Activated CD4-positive, alpha-beta T cell treated with anti-CD3 and anti-CD28 coated beads, Interleukin-2, amount 10 ng/mL, durations not matched to agents 24 days and 14 days (primary cell): ENCODE measurements at regions of chr20 and their contacts with region 1.

Region 1: GRCh38 chr20:62302341-62303058 is at the start of gene ADRM1:
- DNase-seq: peak; percentile 99
- H3K4me3 Mint-ChIP-seq: peak within 1 kb of the TSS; percentile 98
- H3K27ac Mint-ChIP-seq: peak within 1 kb of the TSS; percentile 100
- H3K4me1 Mint-ChIP-seq: peaks cover 20% of the 10 kb centered on the region
- H3K27me3 Mint-ChIP-seq: no peaks in the 10 kb centered on the region
- total RNA-seq, gene ADRM1: 179 and 183 TPM in 2 replicates

Region 2: DNA sequence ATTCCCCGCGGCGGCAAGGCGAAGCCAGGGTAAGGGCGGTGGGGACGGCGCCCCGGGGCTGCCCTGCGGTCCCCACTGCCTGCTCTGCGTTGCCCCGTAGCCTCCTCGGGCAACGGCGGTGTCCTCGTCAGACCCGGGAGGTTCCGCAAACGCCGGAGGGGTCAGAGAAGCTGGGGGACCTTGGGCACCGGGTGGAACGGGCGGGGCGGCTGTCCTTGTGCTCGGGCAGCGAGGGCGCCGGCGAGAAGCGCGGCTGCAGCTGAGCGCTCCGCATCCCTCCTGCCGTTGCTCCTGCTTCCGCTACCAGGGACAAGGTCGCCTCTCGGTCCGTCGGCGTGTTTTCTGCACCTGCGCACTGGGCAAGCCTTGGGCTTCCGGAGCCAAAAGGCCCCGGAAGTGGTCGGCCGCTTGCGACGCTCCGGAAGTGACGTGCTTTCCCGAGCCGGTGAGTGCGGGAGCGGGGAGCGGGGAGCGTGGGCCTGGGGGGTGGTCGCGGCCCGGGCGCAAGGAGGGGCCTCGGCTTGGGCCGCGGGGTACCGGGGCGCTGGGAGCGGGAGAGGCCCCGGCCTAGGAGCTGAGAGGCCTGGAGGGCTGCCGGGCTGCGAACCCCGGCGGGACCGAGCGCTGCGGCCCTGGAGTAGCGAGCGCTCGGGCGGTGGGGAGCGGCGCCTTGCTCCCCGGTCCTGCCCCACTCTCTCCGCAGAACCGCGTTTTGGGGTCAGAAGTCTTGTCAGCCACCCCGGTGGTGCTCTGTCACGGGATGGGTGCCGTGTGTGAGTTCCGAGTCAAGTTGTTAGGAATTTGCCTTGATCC is 119.7 kb before region 1 on chr20 and contains the start of gene MTG2:
- intact Hi-C with region 1: loop called (anchors 2 kb)
- DNase-seq: peak; percentile 99
- H3K4me3 Mint-ChIP-seq: peak within 1 kb of the TSS; percentile 92
- H3K27ac Mint-ChIP-seq: peak within 1 kb of the TSS; percentile 95
- H3K4me1 Mint-ChIP-seq: peaks cover 25% of the 10 kb centered on the region
- H3K27me3 Mint-ChIP-seq: no peaks in the 10 kb centered on the region
- total RNA-seq, gene MTG2: 43.0 and 44.4 TPM in 2 replicates

Region 3: GRCh38 chr20:62368976-62369814 is 66.7 kb after region 1 on chr20:
- intact Hi-C with region 1: loop called (anchors 5 kb)
- DNase-seq: no peak
- H3K4me3 Mint-ChIP-seq: no peak overlapping the region
- H3K27ac Mint-ChIP-seq: no peak overlapping the region
- H3K4me1 Mint-ChIP-seq: peaks cover 3% of the 10 kb centered on the region
- H3K27me3 Mint-ChIP-seq: peaks cover 29% of the 10 kb centered on the region

Region 4: DNA sequence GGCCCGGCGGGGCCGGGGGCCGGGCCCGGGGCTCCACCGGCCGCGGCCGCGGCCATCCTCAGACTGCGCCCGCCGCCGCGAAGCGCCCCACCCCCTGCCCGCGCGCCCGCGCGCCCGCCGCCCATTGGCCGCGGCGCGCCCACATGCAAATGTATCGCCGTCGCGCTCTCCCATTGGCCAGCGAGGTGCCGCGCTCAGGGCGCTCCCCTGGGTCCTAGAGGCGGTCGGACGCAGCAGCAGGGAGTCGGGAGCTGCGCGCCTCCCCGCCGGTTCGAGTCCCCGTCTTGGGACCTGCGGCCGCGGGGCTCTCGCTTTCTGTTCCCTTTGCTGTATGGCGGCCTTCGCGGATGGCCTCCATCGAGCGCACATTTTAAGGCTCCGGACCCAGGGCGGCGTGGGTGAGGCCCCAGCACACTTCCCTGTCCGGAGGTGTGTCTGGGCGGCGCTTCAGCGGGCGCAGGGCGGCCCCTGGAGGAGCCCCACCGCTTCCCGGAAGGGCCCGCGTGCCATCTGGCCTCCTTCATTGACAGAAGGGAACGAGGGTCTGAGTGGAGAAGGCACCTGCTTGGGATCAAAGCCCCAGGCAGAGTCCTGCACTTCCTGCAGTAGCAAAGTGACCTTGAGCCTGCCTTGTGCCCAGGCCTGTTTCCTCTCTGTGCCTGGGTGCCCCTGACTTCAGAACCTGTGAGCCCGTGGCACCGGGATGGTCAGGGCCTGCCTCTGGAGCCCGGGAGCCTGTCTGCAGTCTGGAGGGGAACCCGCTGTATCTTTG is 104.9 kb after region 1 on chr20 and contains the start of gene CABLES2:
- intact Hi-C with region 1: loop called (anchors 5 kb)
- DNase-seq: peak; percentile 98
- H3K4me3 Mint-ChIP-seq: peak within 1 kb of the TSS; percentile 87
- H3K27ac Mint-ChIP-seq: peak within 1 kb of the TSS; percentile 89
- H3K4me1 Mint-ChIP-seq: peaks cover 24% of the 10 kb centered on the region
- H3K27me3 Mint-ChIP-seq: no peaks in the 10 kb centered on the region
- total RNA-seq, gene CABLES2: 13.1 and 13.5 TPM in 2 replicates

Region 5: GRCh38 chr20:62740286-62741141 is 438.0 kb after region 1 on chr20:
- intact Hi-C with region 1: loop called (anchors 1 kb)
- DNase-seq: peak; percentile 96
- H3K4me3 Mint-ChIP-seq: peak overlapping the region; percentile 75
- H3K27ac Mint-ChIP-seq: peak overlapping the region; percentile 80
- H3K4me1 Mint-ChIP-seq: peaks cover 32% of the 10 kb centered on the region
- H3K27me3 Mint-ChIP-seq: peaks cover 11% of the 10 kb centered on the region